Heart right ventricle (tissue), 16 donors: ENCODE measurements at regions of chr6 and their contacts with region 1.

Region 1: DNA sequence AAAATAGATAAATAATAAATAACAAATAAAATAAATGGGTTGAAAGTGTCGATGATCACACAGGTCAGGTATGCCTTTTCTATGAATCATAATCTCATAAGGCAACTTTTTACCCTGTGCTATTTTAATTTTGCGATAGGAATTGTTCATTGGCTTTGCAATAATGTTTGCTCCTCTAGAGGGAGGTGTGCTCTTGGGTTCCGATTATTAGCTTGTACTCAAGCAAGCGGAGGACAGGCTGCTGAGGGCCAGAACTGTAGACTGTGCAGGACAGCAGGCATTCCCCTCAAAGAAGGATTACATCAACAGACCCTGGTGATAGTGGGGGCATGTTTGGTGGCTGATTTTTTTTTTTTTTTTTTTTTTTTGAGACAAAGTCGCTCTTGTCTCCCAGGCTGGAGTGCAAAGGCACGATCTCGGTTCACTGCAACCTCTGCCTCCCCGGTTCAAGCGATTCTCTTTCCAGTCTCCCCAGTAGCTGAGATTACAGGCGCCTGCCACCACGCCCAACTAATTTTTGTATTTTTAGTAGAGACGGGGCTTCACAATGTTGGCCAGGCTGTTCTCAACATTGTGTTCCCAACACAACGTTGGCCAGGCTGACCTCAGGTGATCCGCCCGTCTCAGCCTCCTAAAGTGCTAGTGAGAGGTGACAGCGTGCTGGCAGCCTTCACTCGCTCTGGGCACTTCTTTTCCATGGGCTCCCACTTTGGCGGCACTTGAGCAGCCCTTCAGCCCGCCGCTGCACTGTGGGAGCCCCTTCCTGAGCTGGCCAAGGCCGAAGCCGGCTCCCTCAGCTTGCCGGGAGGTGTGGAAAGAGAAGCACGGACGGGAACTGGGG is 35.6 kb downstream of the RIOK1 start:
- DNase-seq: peak; percentile 25 to 67
- ATAC-seq: peak; percentile 80 to 95 (median 93)
- H3K4me3 ChIP-seq: no peak overlapping the region
- H3K27ac ChIP-seq: peak overlapping the region in 5 of 10 donors; percentile 28 to 75 (median 52)
- H3K4me1 ChIP-seq: peaks cover 0 to 3% (median 0%) of the 10 kb centered on the region in 9 donors
- H3K27me3 ChIP-seq: no peaks in the 10 kb centered on the region
- CTCF ChIP-seq: peak in 8 of 9 donors; percentile 23 to 65 (median 51)

Region 2: GRCh38 chr6:7468382-7469081 is 43.3 kb after region 1 on chr6:
- intact Hi-C with region 1: loop called in 1 of 10 experiments (anchors 5 kb)
- DNase-seq: peak; percentile 66 to 67
- ATAC-seq: peak; percentile 78 to 97 (median 93)
- H3K4me3 ChIP-seq: peak overlapping the region in 9 of 10 donors; percentile 9 to 50 (median 38)
- H3K27ac ChIP-seq: peak overlapping the region in 9 of 10 donors; percentile 48 to 76 (median 71)
- H3K4me1 ChIP-seq: peaks cover 0 to 33% (median 18%) of the 10 kb centered on the region in 9 donors
- H3K27me3 ChIP-seq: no peaks in the 10 kb centered on the region
- CTCF ChIP-seq: peak in 2 of 9 donors; percentile 27 to 29

Region 3: DNA sequence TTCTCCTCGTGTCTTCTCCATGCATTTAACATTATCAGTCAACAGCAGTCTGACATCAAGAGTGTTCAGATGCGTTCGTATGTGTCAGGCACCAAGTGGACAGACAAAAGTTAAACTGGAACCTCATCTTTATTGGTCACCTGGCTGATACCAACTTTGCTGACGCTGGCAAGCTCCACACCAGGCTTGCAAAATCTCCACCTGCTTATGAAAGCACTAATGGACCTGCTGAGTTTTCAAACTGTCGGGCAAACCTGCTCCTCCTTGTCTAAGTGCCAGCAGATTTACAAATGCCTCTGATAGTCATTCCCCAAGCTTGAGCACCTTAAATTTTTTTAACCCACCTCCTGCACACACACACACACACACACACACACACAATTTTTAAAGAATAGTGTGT is 88.3 kb after region 1 on chr6:
- intact Hi-C with region 1: no loop called
- DNase-seq: no peak
- ATAC-seq: no peak
- H3K4me3 ChIP-seq: no peak overlapping the region
- H3K27ac ChIP-seq: no peak overlapping the region
- H3K4me1 ChIP-seq: no peaks in the 10 kb centered on the region
- H3K27me3 ChIP-seq: peaks cover 0 to 10% (median 0%) of the 10 kb centered on the region in 7 donors
- CTCF ChIP-seq: no peak

Region 4: DNA sequence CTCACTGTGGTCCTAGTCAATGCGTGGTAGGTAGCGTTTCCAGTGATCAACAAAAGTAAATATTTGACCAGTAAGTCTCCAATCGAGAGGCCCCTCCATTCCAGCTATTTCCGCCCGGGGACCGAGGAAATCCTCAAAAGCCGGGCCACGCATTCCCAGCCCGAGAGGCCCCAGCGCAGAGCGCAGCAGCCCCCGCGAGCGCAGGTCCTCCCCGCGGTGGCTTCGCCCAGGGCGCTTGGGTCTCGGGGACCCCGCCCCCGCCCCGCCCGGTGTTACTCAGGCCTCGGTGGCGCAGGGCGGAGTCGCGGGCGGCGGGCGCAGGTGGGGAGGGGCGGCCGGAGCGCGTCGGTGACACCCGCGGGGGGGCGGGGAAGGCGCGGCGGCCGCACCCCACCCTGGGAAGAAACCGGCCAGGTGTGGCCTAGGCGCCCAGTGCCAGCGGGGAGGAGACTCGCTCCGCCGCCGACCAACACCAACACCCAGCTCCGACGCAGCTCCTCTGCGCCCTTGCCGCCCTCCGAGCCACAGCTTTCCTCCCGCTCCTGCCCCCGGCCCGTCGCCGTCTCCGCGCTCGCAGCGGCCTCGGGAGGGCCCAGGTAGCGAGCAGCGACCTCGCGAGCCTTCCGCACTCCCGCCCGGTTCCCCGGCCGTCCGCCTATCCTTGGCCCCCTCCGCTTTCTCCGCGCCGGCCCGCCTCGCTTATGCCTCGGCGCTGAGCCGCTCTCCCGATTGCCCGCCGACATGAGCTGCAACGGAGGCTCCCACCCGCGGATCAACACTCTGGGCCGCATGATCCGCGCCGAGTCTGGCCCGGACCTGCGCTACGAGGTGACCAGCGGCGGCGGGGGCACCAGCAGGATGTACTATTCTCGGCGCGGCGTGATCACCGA is 116.2 kb after region 1 on chr6 and contains the start of gene DSP:
- intact Hi-C with region 1: loop called in 6 of 10 experiments (anchors 5 to 10 kb)
- DNase-seq: peak; percentile 63 to 76
- ATAC-seq: peak; percentile 62 to 88 (median 74)
- H3K4me3 ChIP-seq: peak within 1 kb of the TSS; percentile 53 to 73 (median 66)
- H3K27ac ChIP-seq: peak within 1 kb of the TSS; percentile 84 to 93 (median 90)
- H3K4me1 ChIP-seq: peaks cover 0 to 29% (median 15%) of the 10 kb centered on the region in 9 donors
- H3K27me3 ChIP-seq: peaks cover 0 to 100% (median 58%) of the 10 kb centered on the region in 7 donors
- CTCF ChIP-seq: no peak
- total RNA-seq, gene DSP: 273 to 471 (median 379) TPM

Region 5: DNA sequence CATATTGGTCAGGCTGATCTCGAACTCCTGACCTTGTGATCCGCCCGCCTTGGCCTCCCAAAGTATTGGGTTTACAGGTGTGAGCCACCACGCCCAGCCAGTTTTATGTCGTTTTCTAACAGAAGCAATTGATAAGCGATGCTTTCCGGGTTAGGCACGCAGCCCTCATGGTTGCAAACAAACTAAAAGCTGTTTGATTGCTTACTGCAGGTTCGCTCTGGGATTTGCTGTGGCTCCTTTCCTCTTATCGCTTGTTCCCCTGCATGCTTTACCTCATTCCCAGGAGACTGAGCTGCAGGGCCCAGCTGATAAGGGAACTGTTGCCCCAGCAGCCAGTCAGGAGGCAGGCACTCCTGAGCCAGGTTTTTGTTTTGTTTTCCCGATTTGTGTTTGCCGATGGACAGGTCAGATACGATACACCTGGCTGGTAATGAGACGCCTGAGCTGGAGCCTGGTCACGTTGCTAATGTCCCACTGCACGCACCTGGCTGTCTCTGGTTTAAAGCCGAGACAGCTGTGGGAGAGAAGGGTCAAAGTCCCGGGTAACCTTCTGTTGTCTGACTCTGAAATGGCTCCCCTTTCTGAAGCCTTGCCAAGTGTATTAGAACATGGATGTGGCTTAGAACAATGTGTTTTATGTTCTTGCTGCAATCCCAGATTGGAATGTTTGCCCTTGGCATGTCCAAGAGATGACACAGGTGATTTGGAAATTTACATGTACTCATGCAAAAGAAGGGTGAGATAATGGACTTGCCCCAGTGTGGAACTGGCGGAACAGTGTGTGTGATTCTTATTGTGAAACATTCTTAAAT is 136.2 kb after region 1 on chr6:
- intact Hi-C with region 1: loop called in 2 of 10 experiments (anchors 1 to 5 kb)
- DNase-seq: peak in 1 of 2 donors; percentile 18
- ATAC-seq: peak; percentile 46 to 92 (median 84)
- H3K4me3 ChIP-seq: peak overlapping the region in 2 of 10 donors; percentile 7 to 21
- H3K27ac ChIP-seq: peak overlapping the region in 9 of 10 donors; percentile 53 to 76 (median 71)
- H3K4me1 ChIP-seq: peaks cover 0 to 17% (median 0%) of the 10 kb centered on the region in 9 donors
- H3K27me3 ChIP-seq: peaks cover 0 to 23% (median 7%) of the 10 kb centered on the region in 7 donors
- CTCF ChIP-seq: no peak

Region 6: DNA sequence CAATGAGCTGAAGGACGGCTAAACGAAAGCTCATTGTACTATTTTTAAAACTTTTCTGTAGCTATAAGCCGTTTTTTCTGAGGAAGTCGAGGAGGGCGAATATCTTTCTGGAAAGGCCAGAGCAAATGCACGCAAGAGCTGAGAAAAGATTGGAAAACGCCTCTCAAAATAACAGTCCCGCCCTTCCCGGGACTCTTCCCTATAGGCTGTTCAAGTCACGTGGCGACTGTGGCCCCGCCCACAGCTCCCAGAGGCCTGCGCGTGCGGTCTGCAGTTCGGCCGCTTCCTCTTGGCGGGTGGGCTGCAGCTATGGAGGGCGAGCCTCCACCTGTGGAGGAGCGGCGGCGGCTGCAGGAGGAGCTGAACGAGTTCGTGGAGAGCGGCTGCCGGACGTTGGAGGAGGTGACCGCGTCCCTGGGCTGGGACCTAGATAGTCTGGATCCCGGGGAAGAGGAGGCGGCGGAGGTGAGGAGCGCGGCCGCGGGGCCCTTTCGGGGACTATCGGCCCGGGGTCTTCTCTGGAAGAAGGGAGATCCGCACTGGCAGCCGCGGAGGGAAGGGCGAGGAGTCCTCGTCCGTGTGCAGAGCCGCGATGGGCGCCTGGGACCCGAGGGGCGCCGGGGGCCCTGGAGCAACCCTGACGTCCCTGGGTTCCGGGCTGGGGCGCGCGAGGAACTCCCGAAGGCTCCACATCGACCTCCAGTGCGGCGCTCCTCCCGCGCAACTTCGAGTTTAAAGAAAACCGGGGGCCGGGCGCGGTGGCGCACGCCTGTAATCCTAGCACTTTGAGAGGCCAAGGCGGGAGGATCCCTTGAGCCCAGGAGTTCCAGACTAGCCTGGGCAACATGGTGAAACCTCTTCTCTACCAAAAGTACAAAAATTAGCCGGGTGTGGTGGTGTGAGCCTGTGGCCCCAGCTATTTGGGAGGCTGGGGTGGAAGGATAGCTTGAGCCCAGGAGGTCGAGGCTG is 165.0 kb after region 1 on chr6 and contains the start of gene SNRNP48:
- intact Hi-C with region 1: loop called in 1 of 10 experiments (anchors 10 kb)
- DNase-seq: peak; percentile 94 to 96
- ATAC-seq: peak; percentile 98 to 100 (median 99)
- H3K4me3 ChIP-seq: peak within 1 kb of the TSS; percentile 63 to 100 (median 90)
- H3K27ac ChIP-seq: peak within 1 kb of the TSS; percentile 16 to 89 (median 86)
- H3K4me1 ChIP-seq: peaks cover 0 to 56% (median 39%) of the 10 kb centered on the region in 9 donors
- H3K27me3 ChIP-seq: no peaks in the 10 kb centered on the region
- CTCF ChIP-seq: no peak
- total RNA-seq, gene SNRNP48: 9.1 to 21.1 (median 13.1) TPM